Sigmoid colon (tissue), 7 donors: ENCODE measurements at regions of chr18 and their contacts with region 1.

Region 1: DNA sequence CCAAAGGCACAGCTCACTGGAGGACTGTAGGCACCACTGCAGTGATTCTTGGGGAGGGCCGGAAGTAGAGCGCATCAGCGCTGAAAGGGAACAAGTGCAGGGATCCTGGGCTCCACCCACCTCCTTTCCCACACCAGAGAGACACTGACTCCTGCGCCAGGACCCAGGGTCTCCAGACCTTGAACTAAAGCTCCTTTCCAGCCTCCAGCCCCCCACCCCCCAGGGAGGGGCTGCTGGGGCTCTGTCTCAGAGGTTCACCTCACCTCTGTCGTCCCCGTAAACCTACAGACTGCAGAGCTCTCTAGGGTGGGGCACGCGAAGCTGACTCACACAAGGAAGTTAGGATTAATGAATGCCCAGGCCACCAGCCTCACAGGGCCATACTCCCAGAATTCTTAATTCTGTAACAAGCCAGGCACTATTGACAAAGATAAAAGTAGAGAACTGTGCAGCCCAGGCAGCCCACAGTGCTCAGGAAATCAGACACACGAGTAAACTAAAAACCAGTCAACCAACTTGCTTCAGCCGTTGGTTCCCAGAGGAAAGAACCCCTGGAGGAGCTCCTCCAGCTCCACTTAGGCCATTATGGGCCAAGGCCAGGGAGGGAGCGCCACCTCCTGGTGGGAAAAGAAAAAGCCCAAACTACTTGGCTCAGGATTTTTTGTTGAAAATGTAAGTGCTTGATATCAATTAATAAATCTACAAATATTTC is 45.1 kb upstream of the ACAA2 start:
- DNase-seq: peak; percentile 73
- H3K4me3 ChIP-seq: no peak overlapping the region
- H3K27ac ChIP-seq: no peak overlapping the region
- H3K4me1 ChIP-seq: no peaks in the 10 kb centered on the region
- H3K27me3 ChIP-seq: no peaks in the 10 kb centered on the region
- CTCF ChIP-seq: peak; percentile 44 to 88 (median 80)
- EP300 ChIP-seq: no peak
- POLR2A ChIP-seq: no peak

Region 2: DNA sequence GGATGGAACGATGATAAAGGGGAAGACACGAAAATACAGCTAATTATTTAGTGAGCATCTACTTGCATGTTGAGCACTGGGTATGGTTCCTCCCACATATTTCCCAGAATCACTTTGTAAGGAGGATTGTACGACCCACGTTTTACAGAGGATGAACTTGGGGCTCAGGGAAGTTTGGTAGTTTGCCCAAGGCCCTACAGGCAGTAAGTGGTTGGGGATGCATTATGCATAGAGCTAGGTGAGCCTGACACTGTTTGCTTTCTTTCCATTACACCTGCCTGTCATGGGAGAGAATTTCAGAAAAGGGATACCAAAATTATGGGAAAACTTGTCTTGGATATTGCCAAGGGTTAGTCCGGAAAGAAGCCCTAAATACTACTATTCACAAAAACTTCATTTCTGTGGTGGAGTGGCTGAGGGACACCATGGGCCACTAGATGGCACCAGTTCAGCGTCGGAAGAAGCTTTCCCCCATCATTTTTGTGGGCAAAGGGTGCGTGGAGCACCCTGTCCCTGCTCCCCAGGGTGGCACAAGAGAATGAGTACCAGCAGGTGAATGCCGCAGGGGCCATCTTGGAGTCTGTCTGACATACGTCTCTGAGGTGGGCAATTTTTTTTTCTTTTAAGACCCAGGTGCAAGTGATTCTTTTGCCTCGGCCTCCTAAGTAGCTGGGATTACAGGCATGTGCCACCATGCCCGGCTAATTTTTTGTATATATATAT is 347.9 kb before region 1 on chr18:
- intact Hi-C with region 1: loop called (anchors 1 kb)
- DNase-seq: no peak
- H3K4me3 ChIP-seq: no peak overlapping the region
- H3K27ac ChIP-seq: no peak overlapping the region
- H3K4me1 ChIP-seq: no peaks in the 10 kb centered on the region
- H3K27me3 ChIP-seq: peaks cover 0 to 4% (median 0%) of the 10 kb centered on the region in 3 donors
- CTCF ChIP-seq: peak; percentile 33 to 80 (median 48)
- EP300 ChIP-seq: no peak
- POLR2A ChIP-seq: no peak

Region 3: GRCh38 chr18:49555641-49556040 is 302.8 kb before region 1 on chr18:
- intact Hi-C with region 1: loop called (anchors 5 kb)
- DNase-seq: no peak
- H3K4me3 ChIP-seq: no peak overlapping the region
- H3K27ac ChIP-seq: no peak overlapping the region
- H3K4me1 ChIP-seq: peaks cover 0 to 4% (median 3%) of the 10 kb centered on the region in 4 donors
- H3K27me3 ChIP-seq: peaks cover 0 to 20% (median 12%) of the 10 kb centered on the region in 3 donors
- CTCF ChIP-seq: no peak
- EP300 ChIP-seq: no peak
- POLR2A ChIP-seq: no peak

Region 4: DNA sequence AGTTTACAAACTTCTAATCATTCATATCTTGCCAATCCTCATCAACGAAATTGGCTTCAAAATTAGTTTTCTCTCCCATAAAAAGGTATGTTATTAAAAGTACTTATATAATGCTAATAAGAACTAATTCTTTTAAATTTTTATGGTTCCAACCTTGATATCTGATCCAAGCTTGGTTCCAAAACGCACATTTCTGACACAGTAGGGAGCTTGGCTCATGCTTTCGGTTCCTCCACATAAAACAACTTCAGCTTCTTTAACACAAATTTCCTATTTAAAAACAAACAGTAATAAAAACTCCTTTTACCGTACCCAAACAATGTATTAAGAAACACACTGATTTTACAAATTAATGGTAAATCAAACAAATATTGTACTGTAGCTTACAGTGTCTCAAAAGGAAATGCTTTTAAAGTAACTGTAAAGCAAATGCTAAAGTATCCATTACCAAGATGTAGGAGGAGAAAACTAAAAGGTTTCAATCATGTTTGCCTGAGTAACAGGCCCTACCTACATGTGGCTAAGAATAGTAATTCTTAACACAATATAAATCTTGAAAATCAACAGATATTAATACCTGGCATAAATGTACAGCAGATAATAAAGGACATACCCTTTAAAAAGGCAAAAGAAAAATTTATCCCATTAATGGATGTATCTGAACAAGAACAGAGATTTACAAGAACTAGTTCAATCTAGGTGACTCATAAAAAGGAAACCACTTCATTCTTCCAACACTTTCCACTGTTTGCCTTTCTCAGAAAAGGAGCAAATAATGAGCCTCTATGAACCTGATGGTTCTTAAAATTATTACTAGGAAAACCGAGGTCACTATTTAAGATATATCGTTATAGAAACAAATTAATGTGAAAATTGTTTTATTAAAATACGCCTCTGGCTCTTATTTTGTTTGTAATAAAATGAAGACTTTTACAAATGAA is 62.6 kb before region 1 on chr18:
- intact Hi-C with region 1: loop called (anchors 10 kb)
- DNase-seq: no peak
- H3K4me3 ChIP-seq: no peak overlapping the region
- H3K27ac ChIP-seq: no peak overlapping the region
- H3K4me1 ChIP-seq: no peaks in the 10 kb centered on the region
- H3K27me3 ChIP-seq: no peaks in the 10 kb centered on the region
- CTCF ChIP-seq: no peak
- EP300 ChIP-seq: no peak
- POLR2A ChIP-seq: no peak

Region 5: GRCh38 chr18:49813319-49814146 is 44.9 kb before region 1 on chr18 and contains the start of gene ACAA2:
- intact Hi-C with region 1: loop called (anchors 2 kb)
- DNase-seq: peak; percentile 95
- H3K4me3 ChIP-seq: peak within 1 kb of the TSS; percentile 71 to 89 (median 82)
- H3K27ac ChIP-seq: peak within 1 kb of the TSS; percentile 91 to 96 (median 94)
- H3K4me1 ChIP-seq: peaks cover 0 to 28% (median 23%) of the 10 kb centered on the region in 4 donors
- H3K27me3 ChIP-seq: no peaks in the 10 kb centered on the region
- CTCF ChIP-seq: no peak
- EP300 ChIP-seq: no peak
- POLR2A ChIP-seq: peak; percentile 55 to 72
- total RNA-seq, gene ACAA2: 61.8 to 87.7 (median 63.2) TPM